ENCODE measurements at regions of chr11 and their contacts with region 1.

Region 1: DNA sequence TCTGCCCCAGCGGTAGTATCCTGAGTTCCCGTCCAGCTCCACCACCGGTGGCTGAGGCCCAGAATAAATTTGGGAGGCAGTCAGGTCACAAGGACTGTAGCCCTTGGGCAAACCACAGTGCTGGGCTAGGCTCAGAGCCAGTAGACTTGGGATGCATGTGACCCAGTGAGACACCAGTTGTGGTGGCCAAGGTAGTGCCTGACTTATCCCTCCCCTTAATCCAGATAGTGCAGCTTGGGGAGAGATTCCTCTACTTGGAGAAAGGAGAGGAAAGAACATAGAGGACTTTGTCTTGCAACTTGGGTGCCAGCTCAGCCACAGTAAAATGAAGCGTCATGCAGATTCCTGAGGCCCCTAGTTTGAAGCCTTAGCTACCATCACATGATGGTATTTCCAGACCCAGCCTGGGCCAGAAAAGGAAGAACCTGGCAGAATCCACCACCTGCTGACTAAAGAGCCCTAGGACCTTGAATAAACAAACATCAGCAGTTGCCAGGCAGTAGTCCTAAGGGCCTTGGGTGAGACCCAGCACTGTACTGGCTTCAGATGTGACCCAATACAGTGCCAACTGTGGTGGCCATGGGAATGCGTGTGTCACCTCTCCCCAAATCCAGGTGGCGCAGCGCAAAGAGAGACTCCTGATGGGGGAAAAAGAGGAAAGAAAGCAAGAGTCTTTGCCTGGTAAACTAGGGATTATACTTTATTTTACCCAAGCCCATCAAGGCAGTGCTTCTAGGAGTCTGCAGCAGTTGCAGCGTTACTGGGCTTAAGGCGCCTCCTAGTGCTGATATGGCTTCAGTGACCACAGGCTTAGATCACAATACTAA is 17.0 kb upstream of the DDX10 start:
- DNase-seq: peak; percentile 24 to 78 (median 64)
- ATAC-seq: peak; percentile 89
- H3K4me3 ChIP-seq: no peak overlapping the region
- H3K4me3 Mint-ChIP-seq: no peak overlapping the region
- H3K27ac ChIP-seq: no peak overlapping the region
- H3K27ac Mint-ChIP-seq: no peak overlapping the region
- H3K4me1 ChIP-seq: no peaks in the 10 kb centered on the region
- H3K4me1 Mint-ChIP-seq: no peaks in the 10 kb centered on the region
- H3K27me3 ChIP-seq: no peaks in the 10 kb centered on the region
- H3K27me3 Mint-ChIP-seq: peaks cover 5% of the 10 kb centered on the region
- CTCF ChIP-seq: peak; percentile 71

Region 2: GRCh38 chr11:107999759-108000455 is 648.0 kb before region 1 on chr11:
- CTCF ChIA-PET with region 1: no interaction called
- POLR2A ChIA-PET with region 1: no interaction called
- intact Hi-C with region 1: loop called in 1 of 2 experiments (anchors 5 kb)
- DNase-seq: peak in 7 of 9 experiments; percentile 1 to 68 (median 34)
- ATAC-seq: peak; percentile 99
- H3K4me3 ChIP-seq: no peak overlapping the region
- H3K4me3 Mint-ChIP-seq: no peak overlapping the region
- H3K27ac ChIP-seq: no peak overlapping the region
- H3K27ac Mint-ChIP-seq: no peak overlapping the region
- H3K4me1 ChIP-seq: no peaks in the 10 kb centered on the region
- H3K4me1 Mint-ChIP-seq: no peaks in the 10 kb centered on the region
- H3K27me3 ChIP-seq: no peaks in the 10 kb centered on the region
- H3K27me3 Mint-ChIP-seq: peaks cover 10% of the 10 kb centered on the region
- CTCF ChIP-seq: peak; percentile 58

Region 3: GRCh38 chr11:108121274-108122155 is 526.4 kb before region 1 on chr11 and contains the start of gene ACAT1:
- CTCF ChIA-PET with region 1: interaction called, 11 read pairs
- POLR2A ChIA-PET with region 1: no interaction called
- intact Hi-C with region 1: loop called (anchors 1 to 2 kb)
- DNase-seq: peak; percentile 89 to 98 (median 97)
- ATAC-seq: peak; percentile 98
- H3K4me3 ChIP-seq: peak within 1 kb of the TSS; percentile 82 to 89
- H3K4me3 Mint-ChIP-seq: peak within 1 kb of the TSS; percentile 88
- H3K27ac ChIP-seq: peak within 1 kb of the TSS; percentile 59 to 70
- H3K27ac Mint-ChIP-seq: peak within 1 kb of the TSS; percentile 78
- H3K4me1 ChIP-seq: peaks cover 31% of the 10 kb centered on the region
- H3K4me1 Mint-ChIP-seq: peaks cover 43% of the 10 kb centered on the region
- H3K27me3 ChIP-seq: no peaks in the 10 kb centered on the region
- H3K27me3 Mint-ChIP-seq: no peaks in the 10 kb centered on the region
- CTCF ChIP-seq: no peak
- total RNA-seq, gene ACAT1: 14.2 to 15.0 TPM

Region 4: DNA sequence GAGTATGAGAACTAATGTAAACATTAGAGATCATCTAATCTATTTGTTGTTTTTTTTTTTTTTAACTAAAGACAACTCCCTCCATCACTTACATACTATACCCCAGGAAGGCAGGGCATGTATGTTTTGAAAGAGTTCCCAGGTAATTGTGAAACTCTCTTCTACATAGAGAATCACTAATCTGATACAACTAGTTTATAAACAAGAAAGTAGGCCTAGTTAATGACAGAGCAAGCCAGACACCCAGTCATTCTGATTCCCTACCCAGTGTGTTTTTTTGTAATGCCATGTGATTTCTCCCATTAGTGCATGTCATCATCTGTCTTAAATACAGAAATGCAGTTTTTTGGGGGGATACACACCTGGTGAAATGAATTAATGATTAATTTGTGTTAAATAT is 301.5 kb before region 1 on chr11:
- CTCF ChIA-PET with region 1: interaction called, 4 read pairs
- POLR2A ChIA-PET with region 1: no interaction called
- intact Hi-C with region 1: loop called (anchors 2 to 5 kb)
- DNase-seq: no peak
- ATAC-seq: no peak
- H3K4me3 ChIP-seq: no peak overlapping the region
- H3K4me3 Mint-ChIP-seq: no peak overlapping the region
- H3K27ac ChIP-seq: no peak overlapping the region
- H3K27ac Mint-ChIP-seq: peak overlapping the region; percentile 74
- H3K4me1 ChIP-seq: no peaks in the 10 kb centered on the region
- H3K4me1 Mint-ChIP-seq: peaks cover 34% of the 10 kb centered on the region
- H3K27me3 ChIP-seq: no peaks in the 10 kb centered on the region
- H3K27me3 Mint-ChIP-seq: no peaks in the 10 kb centered on the region
- CTCF ChIP-seq: no peak

Region 5: GRCh38 chr11:108680271-108680670 is 32.4 kb after region 1 on chr11:
- CTCF ChIA-PET with region 1: no interaction called
- POLR2A ChIA-PET with region 1: no interaction called
- intact Hi-C with region 1: no loop called
- DNase-seq: no peak
- ATAC-seq: no peak
- H3K4me3 ChIP-seq: no peak overlapping the region
- H3K4me3 Mint-ChIP-seq: no peak overlapping the region
- H3K27ac ChIP-seq: no peak overlapping the region
- H3K27ac Mint-ChIP-seq: no peak overlapping the region
- H3K4me1 ChIP-seq: no peaks in the 10 kb centered on the region
- H3K4me1 Mint-ChIP-seq: peaks cover 12% of the 10 kb centered on the region
- H3K27me3 ChIP-seq: no peaks in the 10 kb centered on the region
- H3K27me3 Mint-ChIP-seq: no peaks in the 10 kb centered on the region
- CTCF ChIP-seq: no peak

Measured in CD8-positive, alpha-beta T cell (primary cell).